GM12878 (cell line): ENCODE measurements at regions of chr9 and their contacts with region 1.

Region 1: GRCh38 chr9:73219985-73220626 is 68.4 kb downstream of the ANXA1 start:
- DNase-seq: peak; percentile 40
- ATAC-seq: peak; percentile 87
- H3K4me3 ChIP-seq: no peak overlapping the region
- H3K27ac ChIP-seq: no peak overlapping the region
- H3K4me1 ChIP-seq: no peaks in the 10 kb centered on the region
- H3K27me3 ChIP-seq: no peaks in the 10 kb centered on the region
- CTCF ChIP-seq: no peak
- EP300 ChIP-seq: no peak
- POLR2A ChIP-seq: no peak
- RAD21 ChIP-seq: no peak

Region 2: GRCh38 chr9:73565833-73566465 is 345.8 kb after region 1 on chr9:
- CTCF ChIA-PET with region 1: no interaction called
- POLR2A ChIA-PET with region 1: no interaction called
- RAD21 ChIA-PET with region 1: no interaction called
- SMC1A ChIA-PET with region 1: no interaction called
- in situ Hi-C with region 1: loop called (anchors 10 kb)
- intact Hi-C with region 1: no loop called
- DNase-seq: no peak
- ATAC-seq: peak; percentile 58
- H3K4me3 ChIP-seq: no peak overlapping the region
- H3K27ac ChIP-seq: no peak overlapping the region
- H3K4me1 ChIP-seq: no peaks in the 10 kb centered on the region
- H3K27me3 ChIP-seq: no peaks in the 10 kb centered on the region
- CTCF ChIP-seq: peak; percentile 40 to 66 (median 40); a peak in 5 of 6 replicates
- EP300 ChIP-seq: no peak
- POLR2A ChIP-seq: no peak
- RAD21 ChIP-seq: peak; percentile 57